Stomach (tissue), 19 donors: ENCODE measurements at regions of chr19 and their contacts with region 1.

Region 1: GRCh38 chr19:3984908-3985642 is at the start of gene EEF2:
- DNase-seq: peak; percentile 93 to 97
- H3K4me3 ChIP-seq: peak within 1 kb of the TSS; percentile 67 to 100 (median 83)
- H3K27ac ChIP-seq: peak within 1 kb of the TSS; percentile 91 to 99 (median 96)
- H3K4me1 ChIP-seq: peaks cover 35 to 78% (median 56%) of the 10 kb centered on the region in 4 donors
- H3K27me3 ChIP-seq: no peaks in the 10 kb centered on the region
- CTCF ChIP-seq: no peak
- EP300 ChIP-seq: no peak
- POLR2A ChIP-seq: peak in 2 of 4 donors; percentile 98 to 99
- total RNA-seq, gene EEF2: 872 to 1,656 (median 1,431) TPM

Region 2: DNA sequence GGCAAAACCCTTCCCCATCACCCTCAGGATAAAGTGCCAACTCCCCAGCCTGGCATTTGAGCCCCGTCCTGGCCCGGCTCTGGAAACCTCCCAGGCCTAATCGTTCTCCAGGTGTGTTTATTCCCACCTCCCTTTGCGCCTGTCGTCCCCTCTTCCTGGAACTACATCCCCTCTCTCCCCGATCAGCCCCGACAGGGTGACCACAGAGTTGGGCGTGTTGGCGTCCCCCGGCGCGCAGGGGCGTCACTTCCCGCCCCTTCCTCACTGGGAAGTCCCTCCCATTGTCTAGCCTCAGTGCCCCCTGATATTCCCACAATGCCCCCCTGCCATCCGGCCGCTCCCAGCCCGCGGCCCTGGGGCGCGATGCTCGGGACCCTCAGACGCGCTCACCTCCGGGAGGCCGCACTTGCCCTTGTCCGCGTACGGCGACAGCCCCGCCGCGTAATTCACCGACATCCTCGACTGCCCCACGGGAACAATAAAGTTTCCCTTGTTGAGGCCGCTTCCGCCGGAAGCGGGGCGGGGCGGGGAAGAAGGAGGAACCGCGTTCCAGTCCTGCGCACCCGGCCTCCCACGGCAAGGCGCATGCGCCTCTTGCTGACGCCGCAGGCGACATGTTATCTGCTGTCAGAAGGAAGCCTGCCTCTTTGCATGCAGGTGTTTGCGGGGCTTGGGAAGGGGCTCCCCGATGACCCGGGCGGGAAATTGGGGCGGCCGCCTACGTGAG is 197.2 kb after region 1 on chr19 and contains the starts of genes ANKRD24 and SIRT6:
- intact Hi-C with region 1: loop called (anchors 10 kb)
- DNase-seq: peak; percentile 97 to 98
- H3K4me3 ChIP-seq: peak within 1 kb of the TSS; percentile 73 to 96 (median 88)
- H3K27ac ChIP-seq: peak within 1 kb of the TSS; percentile 83 to 89 (median 86)
- H3K4me1 ChIP-seq: peaks cover 20 to 44% (median 34%) of the 10 kb centered on the region in 4 donors
- H3K27me3 ChIP-seq: peaks cover 0 to 12% (median 0%) of the 10 kb centered on the region in 3 donors
- CTCF ChIP-seq: peak in 1 of 7 experiments; percentile 36
- EP300 ChIP-seq: no peak
- POLR2A ChIP-seq: peak in 1 of 4 donors; percentile 58
- total RNA-seq, gene ANKRD24: 0.29 to 6.1 (median 3.8) TPM in 4 of 5 donors, not detected in the other
- total RNA-seq, gene SIRT6: 14.0 to 160 (median 28.0) TPM